A549 (cell line): ENCODE measurements at regions of chr4 and their contacts with region 1.

Region 1: GRCh38 chr4:7802093-7802726 is 137.5 kb downstream of the AFAP1 start:
- DNase-seq: peak; percentile 64 to 77
- ATAC-seq: peak; percentile 25 to 54; a peak in 3 of 6 replicates
- H3K4me3 ChIP-seq: no peak overlapping the region
- H3K27ac ChIP-seq: peak overlapping the region; percentile 60 to 91; a peak in 5 of 6 replicates
- H3K4me1 ChIP-seq: peaks cover 45% of the 10 kb centered on the region
- CTCF ChIP-seq: peak; percentile 65
- EP300 ChIP-seq: no peak
- POLR2A ChIP-seq: no peak
- RAD21 ChIP-seq: peak; percentile 62

Region 2: GRCh38 chr4:7770224-7771050 is 31.8 kb before region 1 on chr4:
- CTCF ChIA-PET with region 1: interaction called, 13 read pairs
- POLR2A ChIA-PET with region 1: interaction called, 3 read pairs
- DNase-seq: peak; percentile 22 to 33
- ATAC-seq: peak; percentile 37 to 63; a peak in 4 of 6 replicates
- H3K4me3 ChIP-seq: no peak overlapping the region
- H3K27ac ChIP-seq: 0 out of 6 replicates have a peak overlapping the region, but pooled peaks of 1 of the 2 experiments have one; percentile 26
- H3K4me1 ChIP-seq: no peaks in the 10 kb centered on the region
- CTCF ChIP-seq: peak; percentile 36
- EP300 ChIP-seq: no peak
- POLR2A ChIP-seq: no peak
- RAD21 ChIP-seq: peak in 1 of 2 experiments; percentile 43; a peak in 2 of 5 replicates

Region 3: GRCh38 chr4:7843831-7844593 is 41.8 kb after region 1 on chr4:
- CTCF ChIA-PET with region 1: interaction called, 81 read pairs
- POLR2A ChIA-PET with region 1: interaction called, 22 read pairs
- DNase-seq: peak; percentile 61 to 86
- ATAC-seq: peak; percentile 81 to 89
- H3K4me3 ChIP-seq: no peak overlapping the region
- H3K27ac ChIP-seq: peak overlapping the region; percentile 93 to 98
- H3K4me1 ChIP-seq: peaks cover 69% of the 10 kb centered on the region
- CTCF ChIP-seq: peak; percentile 47
- EP300 ChIP-seq: no peak
- POLR2A ChIP-seq: no peak
- RAD21 ChIP-seq: peak; percentile 57

Region 4: DNA sequence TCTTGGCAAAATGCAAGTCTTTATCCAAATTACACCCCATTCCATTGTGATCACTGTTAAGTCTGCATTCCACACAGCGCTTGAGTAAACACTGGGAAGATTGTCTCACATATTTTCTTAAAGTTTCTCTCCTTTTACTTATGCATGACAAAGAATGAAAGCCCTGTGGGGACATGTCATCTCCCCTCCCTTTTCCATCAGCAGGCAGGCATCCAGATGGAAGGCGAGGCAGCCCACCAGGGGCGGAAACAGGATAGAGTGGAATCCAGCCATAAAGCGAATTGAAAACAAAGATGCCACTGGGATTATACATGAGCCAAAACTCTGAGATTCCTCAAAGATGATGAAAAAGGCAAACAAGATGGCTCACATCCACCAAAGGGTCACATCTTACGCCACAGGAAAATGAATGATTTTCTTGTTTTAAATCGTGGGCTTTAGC is 59.3 kb after region 1 on chr4:
- CTCF ChIA-PET with region 1: interaction called, 39 read pairs
- POLR2A ChIA-PET with region 1: no interaction called
- DNase-seq: peak in 1 of 2 experiments; percentile 77
- ATAC-seq: peak; percentile 65 to 83
- H3K4me3 ChIP-seq: 0 out of 3 replicates have a peak overlapping the region, but pooled peaks have one; percentile 12
- H3K27ac ChIP-seq: peak overlapping the region; percentile 88 to 90
- H3K4me1 ChIP-seq: peaks cover 82% of the 10 kb centered on the region
- CTCF ChIP-seq: no peak
- EP300 ChIP-seq: peak; percentile 66 to 89; a peak in 4 of 5 replicates
- POLR2A ChIP-seq: no peak
- RAD21 ChIP-seq: no peak

Region 5: DNA sequence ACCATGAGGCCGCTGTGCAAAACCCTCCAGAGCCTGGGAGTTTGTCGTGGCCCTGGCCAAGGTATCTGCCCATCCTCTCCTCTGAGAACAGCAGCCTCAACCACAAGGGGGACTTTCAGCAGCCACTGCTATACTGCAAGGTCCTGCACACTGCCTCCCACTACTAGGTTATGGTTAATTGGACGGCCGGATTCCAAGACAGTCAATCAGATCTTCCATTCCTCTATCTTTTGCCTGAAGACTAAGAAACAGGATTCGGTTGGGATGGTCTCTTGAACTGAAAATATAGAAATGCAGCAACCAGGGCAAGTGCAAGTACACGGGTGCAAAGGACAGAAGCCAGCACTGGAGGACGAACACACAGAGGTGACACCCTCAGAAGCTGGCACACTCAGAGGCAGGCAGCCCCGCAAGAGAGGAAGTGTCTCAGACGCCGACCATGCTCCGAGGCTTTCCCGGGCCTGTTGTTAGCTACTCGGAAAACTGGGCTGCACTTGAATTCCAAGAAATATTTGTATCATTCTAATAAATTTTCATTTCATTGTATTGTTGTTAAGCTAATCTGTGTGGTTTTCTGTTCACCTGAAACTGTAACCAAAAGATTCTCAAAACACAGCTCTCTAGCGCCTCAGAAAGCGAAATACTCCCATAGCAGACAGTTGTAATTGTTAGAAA is 74.1 kb after region 1 on chr4:
- CTCF ChIA-PET with region 1: interaction called, 19 read pairs
- POLR2A ChIA-PET with region 1: interaction called, 3 read pairs
- DNase-seq: peak; percentile 75 to 85
- ATAC-seq: peak; percentile 90 to 92
- H3K4me3 ChIP-seq: no peak overlapping the region
- H3K27ac ChIP-seq: peak overlapping the region; percentile 88 to 96
- H3K4me1 ChIP-seq: peaks cover 94% of the 10 kb centered on the region
- CTCF ChIP-seq: peak; percentile 42
- EP300 ChIP-seq: no peak
- POLR2A ChIP-seq: no peak
- RAD21 ChIP-seq: peak; percentile 58 to 67

Region 6: DNA sequence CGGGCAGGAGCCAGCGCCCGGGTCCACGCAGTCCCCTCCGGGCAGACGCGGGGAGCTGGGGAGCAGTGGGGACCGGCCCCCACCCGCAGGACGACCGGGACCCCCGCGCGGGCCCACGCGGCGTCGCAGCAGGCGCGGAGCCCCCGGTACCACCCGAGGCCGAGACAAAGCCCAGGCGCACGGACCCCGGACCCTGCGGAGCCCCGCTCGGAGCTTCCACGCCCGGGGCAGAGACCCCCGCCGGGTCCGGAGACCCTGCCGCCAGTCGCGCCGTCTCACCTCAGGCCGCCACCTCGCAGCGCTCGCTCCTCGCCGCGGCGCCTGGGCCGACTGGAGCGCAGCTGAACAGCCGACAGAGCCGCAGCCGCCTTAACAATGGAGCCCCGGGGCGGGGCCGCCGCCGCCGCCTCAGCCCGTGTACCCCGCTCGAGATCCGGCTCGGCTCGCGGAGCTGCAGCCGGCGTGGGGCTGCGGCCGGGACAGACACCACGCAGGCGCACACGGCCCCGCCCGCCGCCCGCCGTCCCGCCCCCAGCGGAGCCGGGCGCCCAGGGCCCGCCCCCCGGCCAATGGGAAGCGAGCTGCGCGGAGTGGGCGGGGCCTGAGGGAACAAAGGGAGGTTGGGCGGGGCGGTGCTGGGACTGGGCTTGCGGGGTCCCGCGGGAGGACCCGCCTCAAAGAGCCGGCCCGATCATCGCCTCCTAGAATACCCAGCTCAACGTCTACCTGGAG is 137.3 kb after region 1 on chr4 and contains the start of gene AFAP1:
- CTCF ChIA-PET with region 1: interaction called, 17 read pairs
- POLR2A ChIA-PET with region 1: interaction called, 4 read pairs
- DNase-seq: peak; percentile 69 to 81
- ATAC-seq: peak; percentile 82 to 85
- H3K4me3 ChIP-seq: peak within 1 kb of the TSS; percentile 98
- H3K27ac ChIP-seq: peak within 1 kb of the TSS; percentile 93 to 100
- H3K4me1 ChIP-seq: peaks cover 57% of the 10 kb centered on the region
- CTCF ChIP-seq: no peak
- EP300 ChIP-seq: no peak
- POLR2A ChIP-seq: peak; percentile 26; the same call in 1 of the 2 replicates
- RAD21 ChIP-seq: no peak
- polyA plus RNA-seq, gene AFAP1: 18.9 and 25.4 TPM in 2 replicates